Breast epithelium (tissue), 4 donors: ENCODE measurements at regions of chrX and their contacts with region 1.

Region 1: GRCh38 chrX:53330331-53330730 is 48.9 kb upstream of the IQSEC2 start:
- DNase-seq: no peak
- H3K4me3 ChIP-seq: no peak overlapping the region
- H3K27ac ChIP-seq: no peak overlapping the region
- H3K4me1 ChIP-seq: no peaks in the 10 kb centered on the region
- H3K27me3 ChIP-seq: peaks cover 0 to 49% of the 10 kb centered on the region in 2 donors
- CTCF ChIP-seq: no peak
- POLR2A ChIP-seq: no peak

Region 2: GRCh38 chrX:53294024-53294648 is 36.2 kb before region 1 on chrX:
- intact Hi-C with region 1: no loop called
- DNase-seq: no peak
- H3K4me3 ChIP-seq: no peak overlapping the region
- H3K27ac ChIP-seq: no peak overlapping the region
- H3K4me1 ChIP-seq: no peaks in the 10 kb centered on the region
- H3K27me3 ChIP-seq: peaks cover 0 to 47% of the 10 kb centered on the region in 2 donors
- CTCF ChIP-seq: no peak
- POLR2A ChIP-seq: no peak

Region 3: DNA sequence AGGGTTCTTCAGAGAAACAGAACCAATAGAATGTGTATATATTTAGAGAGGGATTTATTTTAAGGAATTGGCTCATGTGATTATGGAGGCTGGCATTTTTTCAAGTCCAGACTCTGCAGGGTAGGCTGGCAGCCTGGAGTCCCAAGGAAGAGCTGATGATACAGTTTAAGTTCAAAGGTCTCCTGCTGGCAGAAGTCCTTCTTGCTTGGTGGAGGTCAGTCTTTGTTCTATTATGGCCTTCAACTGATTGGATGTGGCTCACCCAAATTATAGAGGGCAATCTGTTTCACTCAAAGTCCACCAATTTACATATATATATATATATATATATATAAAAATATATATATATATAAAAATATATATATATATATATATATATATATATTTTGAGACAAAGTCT is 156.0 kb after region 1 on chrX:
- intact Hi-C with region 1: loop called (anchors 5 kb)
- DNase-seq: no peak
- H3K4me3 ChIP-seq: no peak overlapping the region
- H3K27ac ChIP-seq: no peak overlapping the region
- H3K4me1 ChIP-seq: no peaks in the 10 kb centered on the region
- H3K27me3 ChIP-seq: peaks cover 0 to 47% of the 10 kb centered on the region in 2 donors
- CTCF ChIP-seq: no peak
- POLR2A ChIP-seq: no peak